BJ (cell line): ENCODE measurements at regions of chr3 and their contacts with region 1.

Region 1: DNA sequence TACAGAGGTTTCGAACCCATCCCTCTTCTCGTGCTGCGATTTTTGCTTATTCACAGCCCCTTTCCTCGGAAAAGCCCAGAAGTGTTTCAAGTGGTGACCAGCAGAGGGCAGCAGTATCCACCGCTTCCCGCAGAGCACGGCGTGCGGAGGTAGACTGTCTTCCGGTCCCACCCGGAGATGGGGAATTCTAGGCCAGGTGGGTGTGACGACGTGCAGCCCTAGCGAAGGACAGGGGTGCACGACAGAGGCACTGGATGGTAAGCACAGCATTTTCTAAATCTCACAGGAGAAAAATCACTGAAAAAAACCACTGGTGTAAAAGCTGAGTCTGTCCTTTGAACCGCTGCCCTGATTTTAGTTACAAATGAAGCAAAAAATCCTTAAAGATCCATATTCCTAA is 7.4 kb upstream of the PSMD6 start:
- DNase-seq: no peak
- H3K4me3 ChIP-seq: no peak overlapping the region
- H3K27me3 ChIP-seq: peaks cover 6% of the 10 kb centered on the region
- CTCF ChIP-seq: peak; percentile 84

Region 2: DNA sequence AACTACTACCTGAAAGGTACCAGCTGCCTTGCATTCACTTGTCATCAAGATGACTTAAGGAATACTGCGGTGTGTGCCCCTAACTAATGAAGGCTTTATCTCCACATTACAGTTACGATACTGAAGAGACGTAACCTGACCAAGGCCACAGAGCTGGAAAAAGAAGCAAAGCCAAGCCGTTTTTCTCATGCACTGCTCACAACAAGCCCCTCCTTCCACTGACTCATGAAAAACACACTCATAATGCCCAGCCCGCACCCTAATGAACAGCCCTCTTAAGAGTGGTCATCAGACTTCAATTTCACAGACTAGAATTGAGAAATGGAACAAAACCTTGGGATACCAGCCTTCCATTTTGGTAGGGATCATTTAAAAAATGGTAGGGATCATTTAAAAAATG is 19.1 kb before region 1 on chr3:
- CTCF ChIA-PET with region 1: no interaction called
- POLR2A ChIA-PET with region 1: no interaction called
- DNase-seq: peak; percentile 24
- H3K4me3 ChIP-seq: no peak overlapping the region
- H3K27me3 ChIP-seq: no peaks in the 10 kb centered on the region
- CTCF ChIP-seq: no peak

Region 3: GRCh38 chr3:64187065-64187959 is 156.6 kb after region 1 on chr3:
- CTCF ChIA-PET with region 1: interaction called, 10 read pairs
- POLR2A ChIA-PET with region 1: no interaction called
- DNase-seq: peak; percentile 98
- H3K4me3 ChIP-seq: no peak overlapping the region
- H3K27me3 ChIP-seq: no peaks in the 10 kb centered on the region
- CTCF ChIP-seq: peak; percentile 24; the same call in 1 of the 2 replicates

Region 4: GRCh38 chr3:64224826-64225610 is 194.3 kb after region 1 on chr3 and contains the start of gene PRICKLE2:
- CTCF ChIA-PET with region 1: interaction called, 28 read pairs
- POLR2A ChIA-PET with region 1: no interaction called
- DNase-seq: peak; percentile 74
- H3K4me3 ChIP-seq: peak within 1 kb of the TSS; percentile 44
- H3K27me3 ChIP-seq: no peaks in the 10 kb centered on the region
- CTCF ChIP-seq: peak; percentile 40
- polyA plus RNA-seq, gene PRICKLE2: 3.5 and 3.9 TPM in 2 replicates

Region 5: GRCh38 chr3:64399205-64399800 is 368.6 kb after region 1 on chr3:
- CTCF ChIA-PET with region 1: interaction called, 27 read pairs
- POLR2A ChIA-PET with region 1: no interaction called
- DNase-seq: peak; percentile 13
- H3K4me3 ChIP-seq: no peak overlapping the region
- H3K27me3 ChIP-seq: no peaks in the 10 kb centered on the region
- CTCF ChIP-seq: peak; percentile 76

Region 6: GRCh38 chr3:64405211-64405835 is 374.6 kb after region 1 on chr3:
- CTCF ChIA-PET with region 1: interaction called, 27 read pairs
- POLR2A ChIA-PET with region 1: no interaction called
- DNase-seq: no peak
- H3K4me3 ChIP-seq: no peak overlapping the region
- H3K27me3 ChIP-seq: no peaks in the 10 kb centered on the region; the same call in none of the 2 replicates
- CTCF ChIP-seq: no peak